ENCODE measurements at regions of chr10 and their contacts with region 1.

Region 1: GRCh38 chr10:73167783-73168464 is at the starts of genes ECD and FAM149B1:
- DNase-seq: peak; percentile 85 to 97 (median 92)

Region 2: DNA sequence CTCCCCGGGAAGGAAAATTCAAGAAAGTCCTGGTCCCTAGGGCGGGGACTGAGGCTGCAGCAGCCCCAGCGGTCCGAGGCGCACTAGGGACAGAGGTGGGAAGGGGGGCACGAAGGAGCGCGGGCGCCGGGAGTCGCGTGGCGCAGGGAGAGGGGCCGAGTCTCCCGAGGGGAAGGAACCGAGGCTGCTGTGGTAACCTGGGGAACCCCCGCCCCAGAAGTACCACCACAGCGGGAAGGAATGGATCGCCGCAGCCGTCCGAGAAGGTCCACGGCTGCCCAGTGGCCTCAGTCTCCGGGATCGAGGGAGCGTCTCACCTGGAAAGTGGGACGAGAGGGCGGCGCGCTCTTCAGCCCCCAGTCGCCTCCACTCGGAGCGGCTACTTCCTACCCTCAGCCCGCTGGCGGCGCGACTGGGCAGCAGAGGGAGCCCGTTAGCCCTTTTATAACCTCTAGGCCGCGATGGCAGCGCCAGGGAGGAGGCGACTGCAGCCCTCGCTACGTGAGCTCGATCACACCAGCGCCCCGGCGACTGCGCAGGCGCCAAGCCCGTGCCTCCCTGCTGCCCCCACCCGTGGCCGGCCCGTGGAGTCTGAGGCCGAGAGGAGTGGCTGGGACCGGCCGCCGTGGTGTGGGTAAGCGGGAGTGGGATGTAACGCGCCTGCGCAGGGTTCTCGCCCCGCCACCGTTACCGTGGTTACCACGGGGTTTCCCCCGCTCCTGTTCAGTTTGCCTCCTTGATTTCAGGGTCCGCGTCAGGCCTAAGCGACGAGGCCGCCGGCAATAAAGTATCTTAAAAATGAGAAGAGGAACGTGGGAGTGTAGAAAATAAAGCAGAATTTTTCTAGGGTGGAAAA is 71.2 kb before region 1 on chr10 and contains the start of gene P4HA1:
- intact Hi-C with region 1: loop called (anchors 5 kb)
- DNase-seq: peak; percentile 96 to 100 (median 99)

Region 3: DNA sequence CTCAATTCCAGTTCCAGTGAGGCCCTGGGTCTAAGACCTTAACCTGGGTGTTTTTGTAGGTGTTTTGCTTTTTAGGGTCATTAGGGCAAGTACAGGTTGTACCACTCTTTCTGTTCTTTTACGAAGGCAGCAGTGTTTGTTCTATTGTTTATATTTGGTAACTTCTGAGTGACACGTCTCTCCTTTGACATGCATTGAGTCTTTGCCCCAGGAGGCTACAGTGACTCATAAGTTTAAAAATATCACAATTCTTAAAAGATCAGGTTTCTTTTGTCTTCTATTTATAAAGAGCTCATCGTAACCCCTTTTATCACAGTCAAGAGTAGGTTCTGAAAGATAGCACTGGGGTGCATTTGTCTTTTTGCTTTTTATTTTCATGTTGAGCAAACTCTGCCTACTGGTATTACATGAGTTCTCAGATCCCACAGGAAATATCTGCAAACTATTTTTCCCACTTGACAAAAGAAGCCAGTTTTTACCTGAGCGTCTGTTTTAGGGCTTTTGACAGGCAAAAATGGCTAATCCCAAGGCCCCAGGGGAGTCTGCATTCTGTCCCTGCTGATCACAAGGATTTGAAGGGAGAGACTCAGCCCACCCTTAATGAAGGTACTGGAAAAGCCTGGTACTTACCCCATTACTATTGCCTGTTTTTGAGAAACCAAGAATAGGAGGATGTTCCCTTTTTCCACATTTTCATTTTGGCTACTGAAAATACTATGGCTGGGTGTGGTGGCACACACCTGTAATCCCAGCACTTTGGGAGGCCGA is 49.8 kb before region 1 on chr10:
- intact Hi-C with region 1: no loop called
- DNase-seq: peak in 1 of 42 donors; percentile 8

Region 4: DNA sequence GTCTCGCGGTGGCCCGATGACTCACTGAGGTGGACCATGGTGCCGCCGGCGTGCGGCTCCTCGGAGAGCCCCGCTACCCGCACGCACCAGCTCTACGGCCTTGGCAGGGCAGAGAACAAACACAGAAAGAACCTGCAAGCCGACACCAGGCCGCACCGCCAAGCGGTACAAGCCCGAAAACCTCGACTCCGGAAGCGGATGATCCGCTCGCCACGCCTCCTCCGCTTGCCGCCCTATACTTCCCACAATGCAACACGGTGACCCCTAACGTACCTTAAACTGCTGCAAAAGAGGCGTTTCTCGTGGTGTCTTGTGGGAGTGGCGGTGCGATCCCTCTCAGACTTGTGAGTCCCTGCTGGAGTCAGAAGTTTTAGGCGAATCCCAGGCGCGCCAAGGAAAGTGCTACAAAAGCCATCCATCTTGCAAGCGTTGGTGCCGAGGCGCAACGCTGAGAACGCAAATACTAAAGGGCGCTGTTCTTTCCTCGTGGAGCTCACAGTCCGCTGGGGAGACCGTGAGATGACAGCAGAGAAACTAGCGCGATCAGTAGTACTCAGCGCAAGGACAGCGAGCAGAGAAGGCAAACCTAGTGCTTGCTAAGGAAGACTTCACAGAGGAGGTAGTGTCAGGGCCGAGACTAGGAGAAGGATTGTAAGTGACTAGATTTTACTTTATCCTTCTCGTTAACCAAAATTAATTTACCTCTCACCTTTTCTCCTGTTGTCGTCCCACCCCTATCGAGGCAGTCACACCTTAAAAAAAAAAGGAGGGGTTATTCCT is 84.7 kb after region 1 on chr10 and contains the start of gene MRPS16:
- intact Hi-C with region 1: loop called (anchors 10 kb)
- DNase-seq: peak; percentile 89 to 98 (median 95)

Region 5: GRCh38 chr10:73459683-73460314 is 291.9 kb after region 1 on chr10:
- intact Hi-C with region 1: no loop called
- DNase-seq: no peak